HepG2 (cell line): ENCODE measurements at regions of chr21 and their contacts with region 1.

Region 1: GRCh38 chr21:16942703-16943102 is 570.1 kb upstream of the CXADR start:
- DNase-seq: peak; percentile 35
- ATAC-seq: peak; percentile 94
- H3K4me3 ChIP-seq: no peak overlapping the region
- H3K27ac ChIP-seq: no peak overlapping the region
- H3K4me1 ChIP-seq: no peaks in the 10 kb centered on the region
- H3K27me3 ChIP-seq: no peaks in the 10 kb centered on the region
- CTCF ChIP-seq: peak; percentile 57
- EP300 ChIP-seq: no peak
- POLR2A ChIP-seq: no peak
- RAD21 ChIP-seq: 0 out of 2 replicates have a peak, but pooled peaks have one; percentile 32

Region 2: GRCh38 chr21:16968436-16968835 is 25.7 kb after region 1 on chr21:
- CTCF ChIA-PET with region 1: no interaction called
- POLR2A ChIA-PET with region 1: no interaction called
- in situ Hi-C with region 1: no loop called
- intact Hi-C with region 1: no loop called
- DNase-seq: no peak
- ATAC-seq: no peak
- H3K4me3 ChIP-seq: no peak overlapping the region
- H3K27ac ChIP-seq: no peak overlapping the region
- H3K4me1 ChIP-seq: no peaks in the 10 kb centered on the region
- H3K27me3 ChIP-seq: no peaks in the 10 kb centered on the region
- CTCF ChIP-seq: no peak
- EP300 ChIP-seq: no peak
- POLR2A ChIP-seq: no peak
- RAD21 ChIP-seq: no peak

Region 3: DNA sequence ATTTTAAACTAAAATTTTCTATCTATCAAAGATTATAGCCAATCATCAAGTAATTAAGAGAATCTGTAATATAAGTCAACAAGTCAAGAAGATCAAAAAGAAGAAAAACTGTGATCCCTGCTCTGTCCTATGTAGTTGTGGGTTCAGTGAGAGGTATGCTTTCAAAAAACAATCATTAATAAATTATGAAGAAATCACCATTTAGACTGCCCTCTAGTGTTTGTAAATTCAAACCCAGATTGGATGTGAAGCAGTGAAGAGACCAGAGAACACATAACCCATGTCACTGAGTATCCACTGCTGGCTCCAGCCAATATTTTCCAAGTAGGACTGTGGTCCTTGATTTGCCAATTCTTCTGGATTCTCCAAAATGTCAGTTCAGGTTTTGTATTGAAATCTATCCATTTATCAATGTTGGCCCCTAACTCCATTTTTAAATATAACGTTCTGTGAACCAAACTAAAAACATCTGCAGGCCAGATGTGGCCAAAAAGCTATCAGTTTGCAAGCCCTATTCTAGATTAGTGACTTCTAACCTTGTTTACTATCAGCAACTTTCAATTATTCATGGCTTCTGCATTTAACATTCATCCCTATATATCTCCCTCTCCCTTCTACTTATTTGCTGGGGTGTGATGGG is 102.6 kb after region 1 on chr21:
- CTCF ChIA-PET with region 1: no interaction called
- POLR2A ChIA-PET with region 1: no interaction called
- in situ Hi-C with region 1: no loop called
- intact Hi-C with region 1: loop called (anchors 1 kb)
- DNase-seq: no peak
- ATAC-seq: peak; percentile 84
- H3K4me3 ChIP-seq: no peak overlapping the region
- H3K27ac ChIP-seq: no peak overlapping the region
- H3K4me1 ChIP-seq: no peaks in the 10 kb centered on the region
- H3K27me3 ChIP-seq: no peaks in the 10 kb centered on the region
- CTCF ChIP-seq: no peak
- EP300 ChIP-seq: no peak
- POLR2A ChIP-seq: no peak
- RAD21 ChIP-seq: no peak

Region 4: GRCh38 chr21:17270229-17270628 is 327.5 kb after region 1 on chr21:
- CTCF ChIA-PET with region 1: interaction called, 6 read pairs
- POLR2A ChIA-PET with region 1: no interaction called
- in situ Hi-C with region 1: loop called (anchors 10 kb)
- intact Hi-C with region 1: loop called (anchors 1 kb)
- DNase-seq: peak; percentile 34
- ATAC-seq: peak; percentile 80
- H3K4me3 ChIP-seq: no peak overlapping the region
- H3K27ac ChIP-seq: no peak overlapping the region
- H3K4me1 ChIP-seq: no peaks in the 10 kb centered on the region
- H3K27me3 ChIP-seq: no peaks in the 10 kb centered on the region
- CTCF ChIP-seq: peak; percentile 52
- EP300 ChIP-seq: no peak
- POLR2A ChIP-seq: no peak
- RAD21 ChIP-seq: no peak